Activated CD8-positive, alpha-beta T cell treated with anti-CD3 and anti-CD28 coated beads for 36 hours (primary cell): ENCODE measurements at regions of chr2 and their contacts with region 1.

Region 1: DNA sequence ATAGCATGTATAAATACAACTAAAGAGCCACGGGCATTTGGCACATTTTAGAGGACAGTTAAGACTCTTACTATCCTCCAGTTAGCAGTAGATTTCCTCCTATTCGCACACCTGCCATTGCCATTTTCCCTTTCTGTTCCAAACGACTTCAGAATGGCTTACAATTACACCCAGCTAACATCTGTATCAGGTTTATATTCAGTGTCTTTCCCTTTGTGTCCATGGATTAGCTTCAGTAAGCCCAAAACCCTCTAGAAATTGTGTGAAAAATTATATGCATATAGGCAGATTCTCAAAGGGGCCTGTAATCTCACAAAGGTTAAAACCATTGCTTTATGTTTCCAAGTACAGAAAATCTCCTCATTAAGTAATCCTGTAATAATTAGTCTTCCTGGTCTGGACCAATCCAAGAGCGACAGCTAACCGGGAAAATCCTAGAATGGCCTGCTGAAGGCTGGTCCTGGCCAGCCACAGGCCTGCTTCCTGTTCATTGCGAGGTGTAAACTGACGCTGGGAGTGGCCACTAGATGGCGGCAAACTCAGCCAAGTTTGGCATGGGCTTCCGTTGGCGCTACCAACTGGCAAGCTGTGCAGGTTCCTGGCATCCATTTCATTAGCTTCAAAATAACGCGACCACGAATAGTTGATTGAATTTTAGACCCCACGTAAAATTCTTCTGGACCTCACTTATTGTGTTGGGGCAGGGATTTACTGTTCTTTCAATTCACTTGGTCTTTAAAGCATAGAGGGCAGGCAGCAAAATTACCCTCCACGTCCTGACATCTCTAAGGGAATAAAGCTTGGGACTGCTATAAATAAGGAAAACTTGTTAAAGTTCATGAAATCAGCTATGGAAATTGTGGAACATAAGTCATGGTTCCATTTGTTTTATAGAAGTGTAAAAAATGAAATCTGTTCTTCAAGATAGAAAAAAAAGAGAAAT is 17.1 kb downstream of the ARHGAP25 start:
- DNase-seq: peak; percentile 97
- ATAC-seq: peak; percentile 90
- H3K4me3 Mint-ChIP-seq: peak overlapping the region; percentile 30
- H3K27ac Mint-ChIP-seq: peak overlapping the region; percentile 86
- H3K4me1 Mint-ChIP-seq: peaks cover 80% of the 10 kb centered on the region
- H3K27me3 Mint-ChIP-seq: no peaks in the 10 kb centered on the region
- CTCF ChIP-seq: peak; percentile 94

Region 2: DNA sequence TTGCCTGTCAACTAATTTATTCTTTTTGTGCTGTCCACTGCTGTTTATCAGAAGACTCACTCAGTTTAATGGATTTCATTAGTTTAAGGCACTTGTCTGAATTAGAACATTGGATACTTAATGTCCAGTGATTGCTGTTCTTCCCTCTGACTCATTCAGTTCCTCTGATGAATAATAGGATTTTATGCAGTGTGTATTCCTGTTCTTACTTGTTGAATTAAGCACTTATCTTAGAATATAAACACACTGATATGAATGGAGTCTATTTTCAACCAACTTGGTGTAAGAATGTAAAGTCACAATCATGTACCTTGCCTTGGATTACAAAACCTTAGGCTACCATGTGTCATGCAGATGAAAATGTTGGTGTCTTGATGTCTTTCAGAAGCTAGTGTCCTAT is 195.3 kb before region 1 on chr2:
- CTCF ChIA-PET with region 1: no interaction called
- POLR2A ChIA-PET with region 1: no interaction called
- intact Hi-C with region 1: no loop called
- DNase-seq: no peak
- ATAC-seq: no peak
- H3K4me3 Mint-ChIP-seq: no peak overlapping the region
- H3K27ac Mint-ChIP-seq: no peak overlapping the region
- H3K4me1 Mint-ChIP-seq: peaks cover 2% of the 10 kb centered on the region
- H3K27me3 Mint-ChIP-seq: no peaks in the 10 kb centered on the region
- CTCF ChIP-seq: no peak

Region 3: DNA sequence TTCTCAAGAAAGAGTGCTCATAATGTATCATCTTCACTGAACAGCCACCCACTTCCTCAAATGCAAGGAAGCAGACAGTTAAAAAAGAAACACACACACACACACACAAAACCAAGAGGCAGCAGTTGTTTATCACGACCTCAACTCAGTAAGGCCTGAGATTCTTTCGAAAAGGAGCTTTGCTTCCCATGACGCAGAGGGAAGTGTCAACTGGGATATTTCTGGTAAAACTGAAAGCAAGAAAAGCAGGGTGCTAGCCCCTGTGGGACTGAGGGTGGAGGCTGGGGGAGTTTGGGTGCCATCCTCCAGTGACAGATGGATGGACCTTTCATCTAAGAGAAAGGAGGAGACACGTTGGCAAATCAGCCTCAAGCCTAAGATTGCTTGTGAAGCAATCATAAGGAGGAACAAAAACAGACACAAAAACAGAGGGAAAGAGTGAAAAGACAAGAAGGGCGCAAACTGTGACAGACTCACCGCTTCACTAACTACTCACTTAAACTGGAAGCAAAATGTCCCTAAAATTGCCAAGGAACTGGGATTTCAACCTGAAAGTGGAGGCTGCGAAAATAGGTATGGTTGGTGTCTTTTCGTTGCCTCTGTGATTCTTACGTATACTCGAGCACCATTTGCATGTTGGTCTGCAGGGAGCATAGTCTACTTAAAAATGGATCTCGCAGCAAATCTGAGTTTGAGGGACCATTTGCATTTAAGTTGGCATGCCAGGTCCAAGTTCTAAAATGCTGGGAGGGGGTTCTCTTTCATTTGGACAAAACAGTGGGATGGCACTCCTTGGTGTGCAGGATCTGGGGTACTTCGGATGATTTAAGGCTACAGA is 16.8 kb before region 1 on chr2 and contains the start of gene ARHGAP25:
- CTCF ChIA-PET with region 1: interaction called, 119 read pairs
- POLR2A ChIA-PET with region 1: interaction called, 30 read pairs
- intact Hi-C with region 1: no loop called
- DNase-seq: peak; percentile 81
- ATAC-seq: peak; percentile 72
- H3K4me3 Mint-ChIP-seq: no peak within 1 kb of the TSS
- H3K27ac Mint-ChIP-seq: no peak within 1 kb of the TSS
- H3K4me1 Mint-ChIP-seq: peaks cover 30% of the 10 kb centered on the region
- H3K27me3 Mint-ChIP-seq: no peaks in the 10 kb centered on the region
- CTCF ChIP-seq: no peak
- total RNA-seq, gene ARHGAP25: 59.3 to 61.5 TPM

Region 4: DNA sequence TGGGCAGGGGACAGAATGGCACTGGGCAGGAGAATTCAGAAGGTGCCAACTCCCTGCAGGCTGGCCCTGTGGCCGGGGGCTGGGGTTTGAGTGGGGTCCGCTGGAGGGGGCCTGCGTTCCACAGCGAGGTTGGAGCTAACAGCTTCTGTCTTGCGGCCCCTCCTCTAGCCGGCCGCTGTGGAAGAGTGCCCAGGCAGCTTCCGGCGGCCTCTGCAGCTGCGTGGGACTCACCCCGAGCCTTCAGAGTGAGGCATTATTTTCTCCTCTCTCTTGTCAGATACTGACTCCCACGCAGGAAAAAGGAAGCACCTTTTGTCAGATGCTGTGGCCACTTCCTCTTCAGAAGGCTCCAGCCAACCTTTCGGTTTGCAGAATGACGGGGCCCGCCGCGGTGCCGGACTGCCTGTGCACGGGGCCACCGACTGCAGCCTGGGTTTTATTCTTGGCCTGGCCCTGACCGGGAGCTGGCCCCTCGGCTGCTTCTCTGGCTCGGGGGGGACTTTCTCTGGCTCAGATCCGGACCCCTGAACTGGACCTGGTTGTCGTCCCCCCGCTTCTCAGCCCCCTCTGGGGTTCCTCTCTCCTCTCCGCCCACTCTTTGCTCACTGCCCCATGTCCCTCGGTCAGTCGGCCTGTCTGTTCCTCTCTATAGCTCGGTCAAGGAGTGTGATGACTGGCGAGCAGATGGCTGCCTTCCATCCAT is 23.1 kb after region 1 on chr2:
- CTCF ChIA-PET with region 1: interaction called, 35 read pairs
- POLR2A ChIA-PET with region 1: interaction called, 10 read pairs
- intact Hi-C with region 1: no loop called
- DNase-seq: peak; percentile 89
- ATAC-seq: peak; percentile 73
- H3K4me3 Mint-ChIP-seq: peak overlapping the region; percentile 75
- H3K27ac Mint-ChIP-seq: peak overlapping the region; percentile 99
- H3K4me1 Mint-ChIP-seq: peaks cover 87% of the 10 kb centered on the region
- H3K27me3 Mint-ChIP-seq: no peaks in the 10 kb centered on the region
- CTCF ChIP-seq: no peak

Region 5: GRCh38 chr2:68807821-68808266 is 56.2 kb after region 1 on chr2:
- CTCF ChIA-PET with region 1: interaction called, 10 read pairs
- POLR2A ChIA-PET with region 1: no interaction called
- intact Hi-C with region 1: no loop called
- DNase-seq: no peak
- ATAC-seq: peak; percentile 30
- H3K4me3 Mint-ChIP-seq: no peak overlapping the region
- H3K27ac Mint-ChIP-seq: peak overlapping the region; percentile 69
- H3K4me1 Mint-ChIP-seq: peaks cover 34% of the 10 kb centered on the region
- H3K27me3 Mint-ChIP-seq: no peaks in the 10 kb centered on the region
- CTCF ChIP-seq: no peak

Region 6: DNA sequence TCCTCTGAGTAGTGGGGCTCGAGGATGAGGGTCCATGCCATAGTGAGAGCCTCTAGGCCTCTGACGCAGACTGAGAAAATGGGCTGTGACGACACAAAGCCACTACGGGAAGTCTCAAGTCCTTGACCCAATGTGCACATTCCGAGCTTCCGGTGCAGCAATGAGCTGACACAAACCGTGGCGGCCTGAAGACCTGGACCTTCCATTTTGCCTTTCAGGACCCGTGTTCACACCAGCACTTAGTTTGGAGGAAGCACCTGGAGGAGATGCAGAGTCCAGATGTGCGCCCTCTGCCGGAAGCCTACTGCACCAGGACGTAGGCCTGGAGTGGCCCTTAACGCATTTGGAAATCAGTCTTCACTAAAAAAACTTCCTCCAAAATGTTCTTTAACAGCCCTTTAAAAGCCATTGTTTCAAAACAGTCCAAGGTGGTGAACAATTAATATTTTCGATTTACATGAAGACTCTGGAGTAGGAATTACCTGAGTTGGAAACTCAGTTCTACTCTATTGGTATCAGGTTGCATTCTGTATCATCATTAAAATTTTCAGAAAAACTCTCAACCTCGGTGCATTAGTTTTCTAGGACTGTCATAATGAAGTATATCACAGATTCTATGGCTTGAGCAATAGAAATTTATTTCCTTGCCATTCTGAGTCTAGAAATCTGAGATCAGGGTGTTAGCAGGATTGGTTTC is 85.6 kb after region 1 on chr2:
- CTCF ChIA-PET with region 1: interaction called, 136 read pairs
- POLR2A ChIA-PET with region 1: interaction called, 3 read pairs
- intact Hi-C with region 1: loop called (anchors 5 kb)
- DNase-seq: peak; percentile 85
- ATAC-seq: peak; percentile 55
- H3K4me3 Mint-ChIP-seq: no peak overlapping the region
- H3K27ac Mint-ChIP-seq: peak overlapping the region; percentile 43
- H3K4me1 Mint-ChIP-seq: peaks cover 37% of the 10 kb centered on the region
- H3K27me3 Mint-ChIP-seq: no peaks in the 10 kb centered on the region
- CTCF ChIP-seq: peak; percentile 84

Region 7: GRCh38 chr2:68909793-68910674 is 158.4 kb after region 1 on chr2:
- CTCF ChIA-PET with region 1: interaction called, 48 read pairs
- POLR2A ChIA-PET with region 1: interaction called, 18 read pairs
- intact Hi-C with region 1: loop called (anchors 5 kb)
- DNase-seq: peak; percentile 92
- ATAC-seq: peak; percentile 45
- H3K4me3 Mint-ChIP-seq: no peak overlapping the region
- H3K27ac Mint-ChIP-seq: peak overlapping the region; percentile 60
- H3K4me1 Mint-ChIP-seq: peaks cover 35% of the 10 kb centered on the region
- H3K27me3 Mint-ChIP-seq: no peaks in the 10 kb centered on the region
- CTCF ChIP-seq: peak; percentile 91